SK-N-SH (cell line): ENCODE measurements at regions of chr20 and their contacts with region 1.

Region 1: GRCh38 chr20:49982346-49983122 is at the start of gene SNAI1:
- DNase-seq: peak; percentile 98
- H3K4me3 ChIP-seq: peak within 1 kb of the TSS; percentile 76 to 80
- H3K27ac ChIP-seq: peak within 1 kb of the TSS; percentile 43 to 76; a peak in 3 of 4 replicates
- H3K4me1 ChIP-seq: peaks cover 11 to 40% of the 10 kb centered on the region in 2 experiments; a peak in 3 of 4 replicates
- H3K27me3 ChIP-seq: no peaks in the 10 kb centered on the region
- CTCF ChIP-seq: peak; percentile 61
- EP300 ChIP-seq: no peak
- RAD21 ChIP-seq: peak; percentile 46
- polyA plus RNA-seq, gene SNAI1: 3.7 and 6.2 TPM in 2 replicates

Region 2: DNA sequence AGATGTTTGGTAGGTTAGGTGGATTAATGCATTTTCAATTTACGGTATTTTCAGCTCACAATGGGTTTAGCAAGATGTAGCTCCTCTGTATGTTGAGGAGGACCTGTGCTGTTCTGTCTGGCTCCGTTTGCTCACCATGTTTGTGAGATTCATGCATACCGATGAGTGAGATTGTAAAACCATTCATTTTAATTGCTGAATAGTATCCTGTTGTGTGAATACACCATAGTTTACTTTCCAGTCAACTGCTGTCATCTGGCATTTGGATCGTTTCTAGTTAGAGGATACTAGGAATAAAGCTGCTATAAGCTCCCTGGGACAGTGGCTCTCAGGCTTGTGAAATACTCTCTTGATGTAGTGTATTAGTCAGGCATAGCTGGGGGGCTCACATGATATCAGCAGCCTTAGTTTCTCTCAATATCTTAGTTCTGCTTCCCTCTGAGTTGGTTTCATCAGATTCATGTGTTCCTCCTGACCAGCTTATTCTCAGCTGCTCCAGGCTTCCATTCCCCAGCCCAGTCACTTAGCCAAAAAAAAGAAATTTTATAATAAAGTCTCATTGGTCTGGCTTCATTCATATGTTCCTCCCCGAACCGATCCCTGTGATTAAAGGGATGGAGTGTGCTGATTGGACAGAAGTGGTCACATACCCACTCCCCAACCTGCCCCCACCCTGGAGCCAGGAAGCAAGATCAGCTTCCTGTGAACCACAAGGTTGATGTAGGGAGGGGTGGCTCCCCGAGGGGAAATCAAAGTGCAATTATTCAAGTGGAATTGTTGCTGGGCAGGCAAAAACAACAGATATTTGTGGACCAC is 257.9 kb before region 1 on chr20:
- CTCF ChIA-PET with region 1: no interaction called
- POLR2A ChIA-PET with region 1: no interaction called
- DNase-seq: no peak
- H3K4me3 ChIP-seq: no peak overlapping the region
- H3K27ac ChIP-seq: no peak overlapping the region
- H3K4me1 ChIP-seq: no peaks in the 10 kb centered on the region
- H3K27me3 ChIP-seq: no peaks in the 10 kb centered on the region
- CTCF ChIP-seq: no peak
- EP300 ChIP-seq: no peak
- RAD21 ChIP-seq: no peak

Region 3: GRCh38 chr20:49945701-49946477 is 36.6 kb before region 1 on chr20:
- CTCF ChIA-PET with region 1: interaction called, 16 read pairs
- POLR2A ChIA-PET with region 1: no interaction called
- DNase-seq: no peak
- H3K4me3 ChIP-seq: no peak overlapping the region
- H3K27ac ChIP-seq: no peak overlapping the region
- H3K4me1 ChIP-seq: peaks cover 0 to 24% of the 10 kb centered on the region in 2 experiments; a peak in 2 of 4 replicates
- H3K27me3 ChIP-seq: no peaks in the 10 kb centered on the region
- CTCF ChIP-seq: no peak
- EP300 ChIP-seq: no peak
- RAD21 ChIP-seq: no peak

Region 4: DNA sequence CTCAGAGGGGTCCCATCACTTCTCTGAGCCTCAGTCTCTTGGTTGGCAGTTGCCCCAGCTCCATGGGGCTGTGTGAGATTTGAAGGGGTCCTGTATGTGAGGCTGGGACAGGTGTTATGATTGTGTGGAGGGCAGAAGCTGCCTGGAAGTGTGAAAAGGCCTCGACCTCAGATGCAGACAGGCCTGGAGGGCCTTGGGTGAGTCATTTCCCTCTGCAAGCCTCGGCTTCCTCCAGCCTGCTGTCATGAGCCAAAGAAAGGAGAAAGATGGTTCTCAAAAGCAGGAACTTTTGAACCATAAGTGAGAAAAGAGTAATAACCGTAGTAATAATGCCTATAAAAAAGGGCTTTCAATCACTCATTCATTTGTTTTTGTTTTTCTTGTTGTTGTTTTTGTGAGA is 37.8 kb after region 1 on chr20:
- CTCF ChIA-PET with region 1: interaction called, 31 read pairs
- POLR2A ChIA-PET with region 1: interaction called, 13 read pairs
- DNase-seq: no peak
- H3K4me3 ChIP-seq: no peak overlapping the region
- H3K27ac ChIP-seq: no peak overlapping the region; a peak in 1 of 4 replicates
- H3K4me1 ChIP-seq: peaks cover 0 to 21% of the 10 kb centered on the region in 2 experiments; a peak in 1 of 4 replicates
- H3K27me3 ChIP-seq: no peaks in the 10 kb centered on the region
- CTCF ChIP-seq: no peak
- EP300 ChIP-seq: no peak
- RAD21 ChIP-seq: no peak

Region 5: GRCh38 chr20:50054626-50055511 is 72.3 kb after region 1 on chr20:
- CTCF ChIA-PET with region 1: interaction called, 807 read pairs
- POLR2A ChIA-PET with region 1: interaction called, 6 read pairs
- DNase-seq: peak; percentile 93
- H3K4me3 ChIP-seq: no peak overlapping the region
- H3K27ac ChIP-seq: peak overlapping the region; percentile 49 to 97; a peak in 3 of 4 replicates
- H3K4me1 ChIP-seq: peaks cover 6 to 37% of the 10 kb centered on the region in 2 experiments; a peak in 3 of 4 replicates
- H3K27me3 ChIP-seq: no peaks in the 10 kb centered on the region
- CTCF ChIP-seq: no peak
- EP300 ChIP-seq: peak; percentile 73 to 85; a peak in 3 of 4 replicates
- RAD21 ChIP-seq: peak; percentile 36

Region 6: DNA sequence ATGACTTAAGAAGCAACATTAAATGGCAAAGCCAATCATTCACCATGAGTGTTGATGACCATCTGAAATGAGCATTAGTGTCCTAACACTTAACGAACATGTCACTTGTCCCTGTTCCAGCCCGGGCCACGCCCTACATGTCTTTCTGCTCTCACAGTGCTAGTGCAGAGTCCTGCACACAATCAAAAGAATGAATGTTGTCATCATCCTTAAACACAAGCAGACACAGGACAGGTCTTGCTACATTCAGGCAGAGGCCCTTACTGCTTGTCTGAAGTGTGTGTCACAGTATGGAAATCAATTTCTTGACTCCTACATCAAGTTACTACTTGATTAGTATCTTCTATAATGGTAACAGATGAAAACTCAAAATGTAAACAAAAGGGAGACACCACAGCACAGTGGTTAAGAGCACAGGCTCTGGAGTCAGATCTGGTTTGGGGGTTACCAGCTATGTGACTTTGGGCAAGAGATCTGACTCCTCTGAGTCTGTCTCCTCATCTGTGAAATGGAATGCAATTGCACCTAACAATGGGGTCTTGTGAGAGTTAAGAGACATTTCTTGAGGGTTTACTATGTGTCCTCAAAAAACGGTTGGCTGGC is 113.0 kb after region 1 on chr20:
- CTCF ChIA-PET with region 1: interaction called, 31 read pairs
- POLR2A ChIA-PET with region 1: interaction called, 3 read pairs
- DNase-seq: no peak
- H3K4me3 ChIP-seq: no peak overlapping the region
- H3K27ac ChIP-seq: no peak overlapping the region
- H3K4me1 ChIP-seq: peaks cover 0 to 3% of the 10 kb centered on the region in 2 experiments; a peak in 2 of 4 replicates
- H3K27me3 ChIP-seq: no peaks in the 10 kb centered on the region
- CTCF ChIP-seq: no peak
- EP300 ChIP-seq: no peak
- RAD21 ChIP-seq: no peak

Region 7: GRCh38 chr20:50165684-50166554 is 183.4 kb after region 1 on chr20:
- CTCF ChIA-PET with region 1: interaction called, 27 read pairs
- POLR2A ChIA-PET with region 1: no interaction called
- DNase-seq: peak; percentile 88
- H3K4me3 ChIP-seq: peak overlapping the region; percentile 36 to 62
- H3K27ac ChIP-seq: peak overlapping the region; percentile 87 to 93
- H3K4me1 ChIP-seq: peaks cover 12 to 14% of the 10 kb centered on the region in 2 experiments; a peak in 3 of 4 replicates
- H3K27me3 ChIP-seq: no peaks in the 10 kb centered on the region
- CTCF ChIP-seq: no peak
- EP300 ChIP-seq: peak; percentile 75 to 83; a peak in 3 of 4 replicates
- RAD21 ChIP-seq: no peak

Region 8: GRCh38 chr20:50289581-50289980 is 307.0 kb after region 1 on chr20:
- CTCF ChIA-PET with region 1: no interaction called
- POLR2A ChIA-PET with region 1: no interaction called
- DNase-seq: no peak
- H3K4me3 ChIP-seq: no peak overlapping the region
- H3K27ac ChIP-seq: no peak overlapping the region
- H3K4me1 ChIP-seq: peaks cover 15 to 19% of the 10 kb centered on the region in 2 experiments; a peak in 3 of 4 replicates
- H3K27me3 ChIP-seq: no peaks in the 10 kb centered on the region
- CTCF ChIP-seq: no peak
- EP300 ChIP-seq: no peak
- RAD21 ChIP-seq: no peak